GM12878 (cell line): ENCODE measurements at regions of chr11 and their contacts with region 1.

Region 1: GRCh38 chr11:68843703-68844312 is 2.1 kb upstream of the CPT1A start:
- DNase-seq: no peak
- ATAC-seq: peak; percentile 82
- H3K4me3 ChIP-seq: peak overlapping the region; percentile 85
- H3K27ac ChIP-seq: peak overlapping the region; percentile 36
- H3K4me1 ChIP-seq: peaks cover 25% of the 10 kb centered on the region
- H3K27me3 ChIP-seq: no peaks in the 10 kb centered on the region
- CTCF ChIP-seq: peak; percentile 65 to 80 (median 75)
- EP300 ChIP-seq: no peak
- POLR2A ChIP-seq: peak; percentile 55
- RAD21 ChIP-seq: peak; percentile 80

Region 2: GRCh38 chr11:68584097-68584496 is 259.7 kb before region 1 on chr11:
- CTCF ChIA-PET with region 1: interaction called, 5 read pairs
- POLR2A ChIA-PET with region 1: no interaction called
- RAD21 ChIA-PET with region 1: no interaction called
- SMC1A ChIA-PET with region 1: interaction called, 3 read pairs
- in situ Hi-C with region 1: no loop called
- intact Hi-C with region 1: loop called (anchors 5 kb)
- DNase-seq: no peak
- ATAC-seq: peak; percentile 95
- H3K4me3 ChIP-seq: no peak overlapping the region
- H3K27ac ChIP-seq: no peak overlapping the region
- H3K4me1 ChIP-seq: no peaks in the 10 kb centered on the region
- H3K27me3 ChIP-seq: no peaks in the 10 kb centered on the region
- CTCF ChIP-seq: peak; percentile 49 to 77 (median 75)
- EP300 ChIP-seq: no peak
- POLR2A ChIP-seq: no peak
- RAD21 ChIP-seq: peak; percentile 34; the same call in 1 of the 2 replicates

Region 3: DNA sequence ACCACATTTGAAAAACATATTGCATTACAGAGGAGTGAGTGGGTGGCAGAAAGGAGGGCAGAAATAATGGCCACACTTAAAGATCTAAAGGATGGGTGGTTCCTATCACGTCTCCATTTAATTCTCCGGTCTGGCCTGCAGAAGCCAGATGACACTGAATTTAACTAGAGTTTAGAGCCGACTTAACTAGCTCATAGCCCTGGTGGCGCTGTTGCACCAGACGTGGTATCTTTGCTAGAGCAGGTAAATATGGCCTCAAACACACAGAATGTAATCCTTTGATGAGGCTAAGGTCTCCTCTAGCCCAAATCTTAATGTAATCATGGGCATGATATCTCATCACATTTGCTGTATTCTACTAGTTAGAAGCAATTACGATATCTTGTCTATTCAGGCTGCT is 211.0 kb before region 1 on chr11:
- CTCF ChIA-PET with region 1: interaction called, 4 read pairs
- POLR2A ChIA-PET with region 1: no interaction called
- RAD21 ChIA-PET with region 1: interaction called, 4 read pairs
- SMC1A ChIA-PET with region 1: no interaction called
- in situ Hi-C with region 1: no loop called
- intact Hi-C with region 1: loop called (anchors 10 kb)
- DNase-seq: no peak
- ATAC-seq: peak; percentile 79
- H3K4me3 ChIP-seq: no peak overlapping the region
- H3K27ac ChIP-seq: no peak overlapping the region
- H3K4me1 ChIP-seq: no peaks in the 10 kb centered on the region
- H3K27me3 ChIP-seq: no peaks in the 10 kb centered on the region; a peak in 2 of 4 replicates
- CTCF ChIP-seq: peak; percentile 49 to 60 (median 55); a peak in 5 of 6 replicates
- EP300 ChIP-seq: no peak
- POLR2A ChIP-seq: no peak
- RAD21 ChIP-seq: peak; percentile 73

Region 4: DNA sequence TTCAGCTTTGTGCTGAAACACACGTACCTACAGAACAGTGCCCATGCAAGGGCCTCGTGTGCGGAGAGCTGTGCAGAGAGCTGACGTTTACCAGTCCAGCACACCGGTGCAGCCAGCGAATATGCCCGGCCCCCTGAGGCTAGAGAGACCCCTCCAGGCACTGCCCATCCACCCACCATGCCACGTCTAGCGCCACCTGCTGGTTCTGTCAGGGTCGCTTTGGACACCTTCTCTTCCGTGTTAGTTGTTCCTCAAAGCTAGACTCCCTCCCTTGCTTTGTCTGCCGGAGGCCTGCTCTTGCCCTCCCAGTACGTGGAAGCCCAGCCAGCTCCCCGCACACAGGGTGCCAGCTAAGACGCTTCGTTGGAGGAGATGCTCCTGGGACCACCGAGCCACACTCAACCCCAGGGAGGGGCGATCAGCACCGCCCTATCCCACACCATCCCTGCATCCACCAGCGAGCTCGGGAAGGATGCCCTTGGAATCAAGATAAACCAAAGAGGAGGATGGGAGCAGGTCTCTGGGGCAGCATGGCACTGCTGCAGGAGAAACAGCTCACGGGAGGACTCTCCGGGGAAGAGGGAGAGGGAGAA is 45.5 kb before region 1 on chr11:
- CTCF ChIA-PET with region 1: interaction called, 13 read pairs
- POLR2A ChIA-PET with region 1: no interaction called
- RAD21 ChIA-PET with region 1: no interaction called
- SMC1A ChIA-PET with region 1: no interaction called
- in situ Hi-C with region 1: no loop called
- intact Hi-C with region 1: no loop called
- DNase-seq: no peak
- ATAC-seq: peak; percentile 51; the same call in 2 of the 3 replicates
- H3K4me3 ChIP-seq: no peak overlapping the region
- H3K27ac ChIP-seq: no peak overlapping the region
- H3K4me1 ChIP-seq: no peaks in the 10 kb centered on the region
- H3K27me3 ChIP-seq: no peaks in the 10 kb centered on the region
- CTCF ChIP-seq: peak; percentile 48 to 73 (median 60)
- EP300 ChIP-seq: no peak
- POLR2A ChIP-seq: no peak
- RAD21 ChIP-seq: 0 out of 2 replicates have a peak, but pooled peaks have one; percentile 13

Region 5: DNA sequence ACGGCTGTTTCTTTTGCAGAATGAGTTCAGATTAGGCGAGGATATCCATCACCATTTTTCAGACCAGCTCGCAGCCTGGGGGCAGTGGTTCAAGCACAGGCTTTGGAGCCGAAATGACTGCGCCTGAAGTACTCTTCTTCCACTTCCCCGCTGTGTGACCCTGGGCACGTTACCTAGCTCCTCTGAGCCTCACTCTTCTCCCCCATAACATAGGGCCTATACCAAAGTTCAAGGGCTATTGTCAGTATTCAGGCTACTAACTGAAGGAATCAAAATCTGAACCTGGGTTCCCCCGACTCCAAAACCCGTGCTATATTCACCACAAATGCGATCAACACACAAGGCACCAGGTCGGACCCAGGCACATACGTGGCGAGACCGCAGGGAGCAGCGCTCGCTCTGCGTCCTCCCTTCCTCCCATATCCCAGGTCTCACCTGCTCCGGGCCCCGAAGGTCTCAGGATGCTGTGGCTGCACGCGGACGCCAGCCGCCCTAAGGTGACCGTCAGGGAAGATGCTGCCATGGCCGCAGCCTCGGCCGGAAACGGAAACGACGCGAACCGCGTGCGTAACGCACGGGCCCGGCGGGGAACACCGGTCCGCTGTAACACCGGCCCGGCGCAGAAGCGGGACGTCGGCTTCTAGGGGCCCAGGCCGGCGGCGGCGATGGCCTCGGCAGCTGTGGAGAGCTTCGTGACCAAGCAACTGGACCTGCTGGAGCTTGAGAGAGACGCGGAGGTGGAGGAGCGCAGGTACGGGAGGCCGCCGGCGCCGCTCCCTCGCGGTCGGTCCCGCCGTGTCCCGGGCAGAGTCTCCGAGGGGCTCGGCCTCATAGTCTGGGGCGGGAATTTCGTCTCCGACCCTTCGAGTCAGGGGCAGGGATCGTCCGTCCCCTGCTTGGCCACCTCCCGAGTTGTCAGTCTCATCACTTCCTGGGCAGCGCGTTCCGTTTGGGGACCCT is 59.8 kb after region 1 on chr11 and contains the starts of genes IGHMBP2 and MRPL21:
- CTCF ChIA-PET with region 1: no interaction called
- POLR2A ChIA-PET with region 1: interaction called, 3 read pairs
- RAD21 ChIA-PET with region 1: no interaction called
- SMC1A ChIA-PET with region 1: no interaction called
- in situ Hi-C with region 1: no loop called
- intact Hi-C with region 1: loop called (anchors 2 kb)
- DNase-seq: no peak
- ATAC-seq: peak; percentile 98
- H3K4me3 ChIP-seq: peak within 1 kb of the TSS; percentile 100
- H3K27ac ChIP-seq: peak within 1 kb of the TSS; percentile 77
- H3K4me1 ChIP-seq: peaks cover 11% of the 10 kb centered on the region
- H3K27me3 ChIP-seq: no peaks in the 10 kb centered on the region
- CTCF ChIP-seq: no peak
- EP300 ChIP-seq: no peak
- POLR2A ChIP-seq: peak; percentile 99
- RAD21 ChIP-seq: no peak
- polyA plus RNA-seq, gene IGHMBP2: 1.4 to 1.6 TPM
- polyA plus RNA-seq, gene MRPL21: 194 to 283 TPM

Region 6: DNA sequence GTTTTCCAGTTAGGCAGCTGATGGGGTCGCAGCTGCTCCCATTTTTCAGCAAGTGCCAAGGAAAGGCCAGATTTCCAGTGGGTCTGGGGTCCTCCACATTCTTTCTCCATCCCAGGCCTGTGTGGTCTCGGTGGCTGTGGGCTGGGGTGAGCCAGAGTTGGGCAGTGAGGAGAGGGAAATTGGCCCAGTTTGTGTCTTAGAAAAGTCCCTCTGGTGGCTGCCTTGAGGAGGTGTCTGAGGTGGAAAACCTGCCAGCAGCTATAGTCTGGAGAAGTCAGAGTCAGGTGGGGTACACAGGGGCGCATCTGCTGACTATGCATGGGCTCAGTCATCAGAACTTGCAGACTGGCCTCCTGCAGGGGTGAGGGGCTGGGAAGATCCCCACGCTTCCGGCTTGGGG is 106.5 kb after region 1 on chr11:
- CTCF ChIA-PET with region 1: no interaction called
- POLR2A ChIA-PET with region 1: no interaction called
- RAD21 ChIA-PET with region 1: no interaction called
- SMC1A ChIA-PET with region 1: no interaction called
- in situ Hi-C with region 1: no loop called
- intact Hi-C with region 1: no loop called
- DNase-seq: no peak
- ATAC-seq: peak; percentile 78
- H3K4me3 ChIP-seq: no peak overlapping the region
- H3K27ac ChIP-seq: no peak overlapping the region
- H3K4me1 ChIP-seq: no peaks in the 10 kb centered on the region
- H3K27me3 ChIP-seq: no peaks in the 10 kb centered on the region
- CTCF ChIP-seq: peak; percentile 17 to 39 (median 22); a peak in 2 of 6 replicates
- EP300 ChIP-seq: no peak
- POLR2A ChIP-seq: no peak
- RAD21 ChIP-seq: 0 out of 2 replicates have a peak, but pooled peaks have one; percentile 13

Region 7: DNA sequence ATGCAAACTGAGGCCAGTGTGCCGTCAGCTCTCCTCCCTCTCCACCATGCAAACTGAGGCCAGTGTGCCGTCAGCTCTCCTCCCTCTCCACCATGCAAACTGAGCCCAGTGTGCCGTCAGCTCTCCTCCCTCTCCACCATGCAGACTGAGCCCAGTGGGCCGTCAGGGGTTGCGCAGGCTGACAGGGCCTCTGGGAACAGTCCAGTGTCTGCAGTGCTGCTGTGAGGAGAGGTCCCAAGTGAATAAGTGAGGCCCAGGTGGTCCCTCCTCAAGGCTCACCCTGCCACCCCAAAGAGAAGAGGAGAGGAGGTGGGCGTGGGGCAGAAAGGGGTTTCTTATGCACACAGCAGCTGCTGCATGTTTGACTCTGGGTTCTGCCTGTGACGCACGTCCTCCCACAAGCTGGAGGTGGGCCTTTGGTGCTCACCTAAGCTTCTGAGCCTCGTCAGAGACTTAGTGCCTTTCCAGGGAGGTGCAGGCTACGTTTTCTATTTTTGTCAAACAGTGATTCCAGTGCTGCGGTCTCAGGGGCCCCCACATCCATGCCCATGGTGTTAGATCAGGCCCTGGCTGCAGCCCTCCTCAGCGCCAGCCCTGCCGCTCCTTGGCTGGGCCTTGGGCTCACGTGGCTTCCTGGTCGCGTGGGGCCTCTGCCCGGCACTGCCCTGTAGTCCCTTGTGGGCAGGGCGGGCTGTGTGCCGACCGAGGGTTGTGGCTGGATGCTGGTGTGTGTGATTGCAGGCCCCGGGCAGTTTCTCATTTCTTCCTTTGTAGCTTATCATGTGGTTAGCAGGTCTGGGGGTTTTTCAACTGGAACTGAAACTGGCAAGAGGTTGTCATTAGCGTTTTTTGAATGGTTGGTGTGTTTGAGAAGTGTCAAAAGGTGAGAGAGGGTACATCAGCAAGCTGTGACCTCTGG is 212.0 kb after region 1 on chr11:
- CTCF ChIA-PET with region 1: no interaction called
- POLR2A ChIA-PET with region 1: interaction called, 3 read pairs
- RAD21 ChIA-PET with region 1: no interaction called
- SMC1A ChIA-PET with region 1: no interaction called
- in situ Hi-C with region 1: no loop called
- intact Hi-C with region 1: loop called (anchors 10 kb)
- DNase-seq: peak; percentile 94
- ATAC-seq: peak; percentile 85
- H3K4me3 ChIP-seq: peak overlapping the region; percentile 43; the same call in 1 of the 2 replicates
- H3K27ac ChIP-seq: peak overlapping the region; percentile 92
- H3K4me1 ChIP-seq: peaks cover 50% of the 10 kb centered on the region
- H3K27me3 ChIP-seq: no peaks in the 10 kb centered on the region
- CTCF ChIP-seq: no peak
- EP300 ChIP-seq: peak; percentile 85 to 87
- POLR2A ChIP-seq: peak; percentile 47; the same call in 1 of the 2 replicates
- RAD21 ChIP-seq: no peak